Posterior cingulate gyrus (tissue), 11 donors: ENCODE measurements at regions of chr11 and their contacts with region 1.

Region 1: GRCh38 chr11:113305440-113306336 is 8.7 kb upstream of the TTC12 start:
- DNase-seq: peak; percentile 68 to 97 (median 87)

Region 2: DNA sequence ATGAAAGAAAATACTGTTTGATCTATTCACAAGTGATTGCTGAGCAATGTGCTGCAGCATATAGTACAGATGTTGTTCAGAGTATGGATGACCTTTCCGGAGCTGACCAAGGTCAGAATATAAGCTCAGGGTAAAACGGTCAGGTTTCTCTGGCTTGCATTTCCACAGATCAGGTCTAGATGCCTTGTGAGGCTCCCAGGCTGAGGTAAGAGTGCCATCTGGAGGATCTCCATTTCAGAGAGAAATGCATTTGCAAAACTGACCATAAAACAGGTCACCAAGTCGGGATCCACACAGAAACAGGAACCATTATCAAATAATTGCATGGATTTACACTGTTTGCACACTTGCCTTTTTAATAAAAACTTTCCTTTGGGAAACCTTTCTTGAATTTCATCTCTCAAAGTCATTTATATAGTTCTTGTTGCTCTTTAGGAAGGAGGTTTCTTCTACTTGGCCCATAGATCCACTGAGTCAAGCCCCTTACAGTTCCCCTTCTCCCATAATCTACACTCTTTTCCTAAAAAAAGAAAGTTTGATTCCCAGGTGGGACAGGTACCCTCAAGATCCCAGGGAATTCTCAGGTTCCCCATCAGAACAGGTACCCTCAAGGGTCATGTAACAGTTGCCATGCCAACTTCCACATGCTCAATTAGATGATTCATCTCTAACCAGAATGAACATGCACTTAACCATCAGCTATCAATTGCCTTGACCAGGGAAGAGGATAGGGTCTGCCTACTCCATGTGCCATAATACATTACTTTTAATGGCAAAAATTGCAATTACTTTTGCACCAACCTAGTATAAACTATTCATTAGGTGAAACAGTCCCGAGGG is 425.4 kb after region 1 on chr11:
- intact Hi-C with region 1: loop called (anchors 1 kb)
- DNase-seq: peak in 6 of 10 donors; percentile 24 to 86 (median 53)

Region 3: GRCh38 chr11:113796663-113797259 is 491.1 kb after region 1 on chr11:
- intact Hi-C with region 1: loop called (anchors 5 kb)
- DNase-seq: peak in 1 of 10 donors; percentile 21

Region 4: DNA sequence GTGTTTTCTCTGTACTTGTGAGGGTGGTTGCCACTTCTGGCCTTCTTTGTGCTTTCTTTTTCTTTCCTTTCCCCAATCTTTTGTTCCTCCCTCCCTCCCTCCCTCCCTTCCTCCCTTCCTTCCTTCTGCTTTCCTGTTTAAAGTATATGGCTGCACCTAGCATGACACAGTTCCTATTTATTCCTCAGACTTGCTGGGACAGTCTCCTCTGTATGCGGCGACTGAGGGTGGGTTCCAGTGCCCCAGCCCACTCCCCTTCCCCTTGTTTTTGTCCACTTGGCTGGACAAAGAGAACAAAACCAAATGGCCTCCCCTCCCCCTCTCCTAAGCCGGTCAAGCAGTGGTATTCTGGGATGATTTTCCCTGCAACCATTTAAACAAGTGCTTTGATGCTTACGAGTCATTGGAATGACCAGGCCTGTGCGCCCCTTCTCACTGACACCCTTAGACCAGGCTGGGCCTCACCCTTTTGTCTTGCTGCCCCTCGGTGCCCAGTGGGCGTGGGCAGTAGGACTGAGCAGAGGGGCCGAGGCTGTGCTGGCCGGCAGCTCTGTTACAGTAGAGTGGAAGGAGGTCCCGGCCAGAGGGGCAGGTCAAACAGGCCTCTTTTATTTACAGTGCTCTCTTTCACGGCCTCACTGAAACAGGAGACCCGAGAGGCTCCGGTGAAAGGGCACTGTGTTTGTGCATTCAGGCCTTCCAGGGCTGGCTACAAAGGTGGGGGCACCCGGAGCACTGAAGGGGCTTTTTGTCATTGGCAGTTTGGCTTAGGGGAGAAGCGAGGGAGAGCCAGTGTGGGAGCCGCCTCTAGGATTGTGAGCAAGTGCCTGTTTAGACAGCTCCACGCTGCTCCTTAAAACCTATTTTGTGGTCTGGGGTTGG is 786.1 kb after region 1 on chr11:
- intact Hi-C with region 1: no loop called
- DNase-seq: peak in 3 of 10 donors; percentile 39 to 92 (median 43)